ENCODE measurements at regions of chr17 and their contacts with region 1.

Region 1: GRCh38 chr17:4412933-4413831 is 20.6 kb upstream of the SPNS3 start:
- DNase-seq: peak; percentile 75
- ATAC-seq: peak; percentile 100
- H3K4me3 ChIP-seq: no peak overlapping the region
- H3K27ac ChIP-seq: no peak overlapping the region
- H3K4me1 ChIP-seq: peaks cover 0 to 4% of the 10 kb centered on the region in 2 experiments; a peak in 2 of 4 replicates
- H3K27me3 ChIP-seq: no peaks in the 10 kb centered on the region
- CTCF ChIP-seq: peak; percentile 85 to 98 (median 90)
- POLR2A ChIP-seq: no peak
- RAD21 ChIP-seq: peak; percentile 99

Region 2: GRCh38 chr17:3929764-3930163 is 483.4 kb before region 1 on chr17:
- CTCF ChIA-PET with region 1: no interaction called
- POLR2A ChIA-PET with region 1: no interaction called
- RAD21 ChIA-PET with region 1: no interaction called
- intact Hi-C with region 1: loop called (anchors 5 kb)
- DNase-seq: no peak
- ATAC-seq: no peak
- H3K4me3 ChIP-seq: no peak overlapping the region
- H3K27ac ChIP-seq: no peak overlapping the region
- H3K4me1 ChIP-seq: no peaks in the 10 kb centered on the region
- H3K27me3 ChIP-seq: no peaks in the 10 kb centered on the region
- CTCF ChIP-seq: no peak
- POLR2A ChIP-seq: no peak
- RAD21 ChIP-seq: no peak

Region 3: GRCh38 chr17:4035081-4035680 is 378.0 kb before region 1 on chr17:
- CTCF ChIA-PET with region 1: no interaction called
- POLR2A ChIA-PET with region 1: no interaction called
- RAD21 ChIA-PET with region 1: no interaction called
- intact Hi-C with region 1: loop called (anchors 10 kb)
- DNase-seq: no peak
- ATAC-seq: no peak
- H3K4me3 ChIP-seq: no peak overlapping the region
- H3K27ac ChIP-seq: no peak overlapping the region
- H3K4me1 ChIP-seq: no peaks in the 10 kb centered on the region
- H3K27me3 ChIP-seq: no peaks in the 10 kb centered on the region
- CTCF ChIP-seq: peak in 1 of 3 experiments; percentile 22; a peak in 1 of 6 replicates
- POLR2A ChIP-seq: no peak
- RAD21 ChIP-seq: 0 out of 2 replicates have a peak, but pooled peaks have one; percentile 6

Region 4: DNA sequence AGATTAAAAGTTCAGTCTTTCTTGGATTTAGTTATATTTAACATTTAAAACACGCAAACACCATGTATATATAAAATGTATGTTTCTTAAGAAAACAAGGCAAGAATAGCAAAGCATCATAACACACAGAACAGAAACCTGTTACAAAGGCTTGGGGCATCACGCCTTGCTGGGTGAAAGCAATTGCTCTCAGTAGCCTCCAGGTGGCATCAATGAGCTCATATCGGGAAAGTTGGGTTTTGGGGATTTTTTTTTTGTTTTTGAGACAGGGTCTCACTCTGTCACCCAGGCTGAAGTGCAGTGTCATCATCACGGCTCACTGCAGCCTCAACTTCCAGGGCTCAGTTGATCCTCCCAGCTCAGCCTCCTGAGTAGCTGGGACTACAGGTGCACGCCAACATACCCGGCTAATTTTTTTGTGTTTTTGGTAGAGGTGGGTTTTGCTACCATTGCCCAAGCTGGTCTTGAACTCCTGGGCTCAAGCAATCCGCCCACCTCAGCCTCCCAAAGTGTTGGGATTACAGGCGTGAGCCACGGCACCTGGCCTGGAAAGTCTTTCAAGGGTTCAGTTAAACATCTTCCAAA is 213.3 kb before region 1 on chr17:
- CTCF ChIA-PET with region 1: interaction called, 18 read pairs
- POLR2A ChIA-PET with region 1: no interaction called
- RAD21 ChIA-PET with region 1: interaction called, 5 to 6 read pairs
- intact Hi-C with region 1: loop called (anchors 1 kb)
- DNase-seq: peak; percentile 18
- ATAC-seq: peak; percentile 60; the same call in 1 of the 2 replicates
- H3K4me3 ChIP-seq: no peak overlapping the region
- H3K27ac ChIP-seq: no peak overlapping the region
- H3K4me1 ChIP-seq: no peaks in the 10 kb centered on the region
- H3K27me3 ChIP-seq: no peaks in the 10 kb centered on the region
- CTCF ChIP-seq: peak; percentile 56 to 82 (median 74); a peak in 5 of 6 replicates
- POLR2A ChIP-seq: no peak
- RAD21 ChIP-seq: peak; percentile 46

Region 5: DNA sequence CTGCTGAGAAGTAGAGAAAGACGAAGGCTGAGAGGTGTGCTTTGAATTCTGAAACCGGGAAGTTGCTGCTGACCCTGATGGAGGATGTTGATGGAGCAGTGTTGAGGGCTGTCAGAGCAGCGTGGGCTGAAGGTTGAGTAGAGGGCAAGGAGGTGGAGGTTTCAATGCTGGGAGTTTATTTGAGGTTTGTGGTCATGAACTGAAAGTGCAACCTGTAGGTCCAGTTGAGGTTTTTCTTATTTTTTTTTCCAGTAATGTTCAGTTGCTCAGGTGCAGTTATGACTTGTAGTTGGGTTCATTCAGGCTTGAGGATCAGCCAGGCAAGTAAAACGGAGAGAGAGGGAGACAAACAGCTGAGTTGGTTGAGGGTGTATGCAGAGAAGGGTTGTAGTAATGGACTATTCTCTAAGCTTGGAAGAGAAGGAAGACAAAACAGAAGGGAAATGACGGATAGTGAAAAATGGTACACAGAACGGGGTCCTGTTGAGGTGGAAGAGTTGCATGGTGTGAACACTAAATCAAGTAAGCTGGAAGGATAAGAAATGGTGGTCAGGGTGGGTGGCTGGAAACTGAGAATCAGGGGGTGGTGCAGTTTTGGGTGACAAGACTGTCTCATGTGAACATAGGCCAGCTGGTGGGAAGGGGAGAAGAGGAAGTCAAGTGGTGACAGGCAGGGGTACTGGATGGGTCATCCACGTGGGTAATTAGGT is 38.0 kb before region 1 on chr17:
- CTCF ChIA-PET with region 1: no interaction called
- POLR2A ChIA-PET with region 1: no interaction called
- RAD21 ChIA-PET with region 1: no interaction called
- intact Hi-C with region 1: no loop called
- DNase-seq: no peak
- ATAC-seq: no peak
- H3K4me3 ChIP-seq: no peak overlapping the region
- H3K27ac ChIP-seq: no peak overlapping the region
- H3K4me1 ChIP-seq: no peaks in the 10 kb centered on the region
- H3K27me3 ChIP-seq: no peaks in the 10 kb centered on the region
- CTCF ChIP-seq: no peak
- POLR2A ChIP-seq: no peak
- RAD21 ChIP-seq: no peak

Region 6: GRCh38 chr17:4426499-4427208 is 13.5 kb after region 1 on chr17:
- CTCF ChIA-PET with region 1: no interaction called
- POLR2A ChIA-PET with region 1: no interaction called
- RAD21 ChIA-PET with region 1: no interaction called
- intact Hi-C with region 1: no loop called
- DNase-seq: no peak
- ATAC-seq: no peak
- H3K4me3 ChIP-seq: no peak overlapping the region
- H3K27ac ChIP-seq: no peak overlapping the region
- H3K4me1 ChIP-seq: no peaks in the 10 kb centered on the region
- H3K27me3 ChIP-seq: no peaks in the 10 kb centered on the region
- CTCF ChIP-seq: no peak
- POLR2A ChIP-seq: no peak
- RAD21 ChIP-seq: no peak

Region 7: DNA sequence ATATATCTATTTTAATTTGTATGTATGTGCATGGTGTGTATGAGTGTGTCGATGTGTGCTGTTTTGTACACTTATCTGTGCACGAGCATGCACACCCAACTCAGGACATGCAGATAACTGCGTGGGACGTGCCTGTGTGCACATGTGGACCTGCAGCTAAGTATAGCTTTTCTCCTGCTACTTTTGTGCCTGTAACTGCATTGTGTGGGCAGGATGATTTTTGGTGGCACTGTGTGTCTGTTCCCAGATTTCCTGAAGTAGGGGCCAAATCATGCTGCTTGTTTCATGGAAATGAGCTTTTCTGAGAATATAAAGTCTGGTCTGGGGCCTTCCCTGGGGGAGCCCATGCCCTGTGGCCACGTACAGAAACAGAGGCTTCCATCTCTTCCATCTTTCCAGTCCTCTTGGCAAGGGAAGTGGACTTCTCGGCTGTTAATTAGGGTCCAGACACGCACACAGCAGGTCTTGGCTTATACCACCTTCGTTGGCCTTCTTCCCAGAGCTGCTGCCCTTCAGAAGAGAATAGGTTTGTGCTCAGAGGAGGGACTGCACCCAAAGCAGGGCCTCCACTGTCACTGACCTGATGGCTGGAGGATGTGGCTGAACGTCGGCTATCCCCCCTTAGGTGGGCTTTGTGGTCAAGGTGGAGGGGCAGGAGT is 50.8 kb after region 1 on chr17:
- CTCF ChIA-PET with region 1: no interaction called
- POLR2A ChIA-PET with region 1: no interaction called
- RAD21 ChIA-PET with region 1: no interaction called
- intact Hi-C with region 1: no loop called
- DNase-seq: no peak
- ATAC-seq: no peak
- H3K4me3 ChIP-seq: no peak overlapping the region
- H3K27ac ChIP-seq: no peak overlapping the region
- H3K4me1 ChIP-seq: no peaks in the 10 kb centered on the region
- H3K27me3 ChIP-seq: no peaks in the 10 kb centered on the region
- CTCF ChIP-seq: no peak
- POLR2A ChIP-seq: no peak
- RAD21 ChIP-seq: no peak